Uterus (tissue), 4 donors: ENCODE measurements at regions of chr11 and their contacts with region 1.

Region 1: GRCh38 chr11:128884703-128885338 is 6.3 kb upstream of the KCNJ5 start:
- DNase-seq: peak; percentile 25 to 43
- H3K4me3 ChIP-seq: no peak overlapping the region
- H3K27ac ChIP-seq: no peak overlapping the region
- H3K4me1 ChIP-seq: no peaks in the 10 kb centered on the region
- H3K27me3 ChIP-seq: no peaks in the 10 kb centered on the region
- CTCF ChIP-seq: peak; percentile 58 to 85 (median 78)
- POLR2A ChIP-seq: no peak

Region 2: DNA sequence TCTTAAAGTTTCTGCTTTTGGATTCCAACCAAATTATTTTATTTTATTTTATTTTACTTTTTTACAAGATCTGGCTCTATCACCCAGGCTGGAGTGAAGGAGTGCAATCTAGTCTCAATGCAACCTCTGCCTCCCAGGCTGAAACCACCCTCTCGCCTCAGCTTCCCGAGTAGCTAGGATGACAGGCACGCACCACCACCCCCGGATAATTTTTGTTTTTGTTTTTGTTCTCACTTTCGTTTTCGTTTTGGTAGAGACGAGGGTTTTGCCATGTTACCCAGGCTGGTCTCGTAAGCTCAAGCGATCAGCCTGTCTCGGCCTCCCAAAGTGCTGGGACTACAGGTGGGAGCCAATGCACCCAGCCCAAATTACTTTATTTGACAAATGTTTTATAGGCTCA is 517.2 kb before region 1 on chr11:
- intact Hi-C with region 1: no loop called
- DNase-seq: no peak
- H3K4me3 ChIP-seq: no peak overlapping the region
- H3K27ac ChIP-seq: no peak overlapping the region
- H3K4me1 ChIP-seq: no peaks in the 10 kb centered on the region
- H3K27me3 ChIP-seq: no peaks in the 10 kb centered on the region
- CTCF ChIP-seq: no peak
- POLR2A ChIP-seq: no peak

Region 3: DNA sequence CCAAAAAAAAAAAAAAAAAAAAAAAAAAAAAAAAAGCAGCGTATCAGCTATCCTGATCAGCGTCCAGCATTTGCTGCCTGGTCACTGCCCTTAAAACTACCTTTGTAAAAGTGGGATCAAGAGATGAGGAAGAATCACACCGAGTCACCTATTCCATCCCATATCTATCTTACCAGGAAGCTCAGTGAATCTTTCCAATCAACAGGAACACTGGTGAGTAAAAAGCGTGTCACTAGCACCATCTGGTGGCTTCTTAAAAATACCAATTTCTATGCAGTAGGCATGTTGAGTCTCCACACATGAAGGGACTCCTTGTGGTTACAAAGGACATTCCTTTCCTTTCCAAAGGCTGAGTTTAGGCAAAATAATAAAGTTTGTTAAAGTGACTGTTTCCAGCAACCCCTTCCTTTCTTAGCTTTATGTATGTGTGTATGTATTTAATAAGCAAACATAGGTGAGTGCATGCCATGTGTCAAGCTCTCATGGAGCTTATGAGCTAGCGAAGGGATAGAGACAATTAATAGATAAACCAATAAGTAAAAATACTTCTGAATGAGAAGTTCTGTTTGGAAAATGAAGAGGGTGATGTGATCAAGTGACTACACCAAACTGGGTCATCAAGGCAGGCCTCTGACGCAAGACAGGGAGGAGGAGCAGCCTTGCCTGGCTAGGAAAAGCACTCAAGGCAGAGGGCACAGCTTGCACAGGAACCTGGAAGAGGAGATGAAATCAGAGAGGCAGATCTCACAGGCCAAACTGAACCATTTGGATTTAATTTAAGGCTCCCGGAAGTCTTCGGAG is 71.8 kb after region 1 on chr11:
- intact Hi-C with region 1: loop called (anchors 5 kb)
- DNase-seq: no peak
- H3K4me3 ChIP-seq: no peak overlapping the region
- H3K27ac ChIP-seq: no peak overlapping the region
- H3K4me1 ChIP-seq: no peaks in the 10 kb centered on the region
- H3K27me3 ChIP-seq: no peaks in the 10 kb centered on the region
- CTCF ChIP-seq: peak; percentile 46 to 81 (median 59)
- POLR2A ChIP-seq: no peak